ENCODE measurements at regions of chr13 and their contacts with region 1.

Region 1: GRCh38 chr13:45490068-45490467 is 25.3 kb downstream of the COG3 start:
- DNase-seq: no peak
- H3K4me3 ChIP-seq: no peak overlapping the region
- H3K27ac ChIP-seq: no peak overlapping the region
- H3K4me1 ChIP-seq: no peaks in the 10 kb centered on the region
- H3K27me3 ChIP-seq: no peaks in the 10 kb centered on the region
- CTCF ChIP-seq: peak in 2 of 3 experiments; percentile 34 to 42; a peak in 2 of 4 replicates
- EP300 ChIP-seq: no peak
- POLR2A ChIP-seq: no peak
- RAD21 ChIP-seq: peak; percentile 55 to 66

Region 2: DNA sequence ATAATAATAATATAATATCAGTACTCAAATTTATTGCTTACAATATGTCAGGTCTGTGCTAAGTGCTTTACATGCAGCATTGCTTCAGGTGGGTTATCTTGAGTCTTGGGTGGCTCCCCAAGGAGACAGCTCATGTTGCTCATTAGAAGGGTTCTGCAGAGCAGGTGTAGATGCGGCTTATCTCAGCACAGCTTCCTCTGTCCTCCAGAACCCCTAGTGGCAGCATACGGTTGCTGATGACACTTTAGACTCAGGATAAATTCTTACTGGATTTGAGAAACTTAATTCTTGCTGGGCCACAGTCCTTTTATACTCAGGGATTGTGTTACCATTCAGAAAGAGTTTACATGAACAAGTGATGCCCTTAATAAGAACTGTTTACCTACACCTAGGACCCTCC is 16.4 kb before region 1 on chr13:
- CTCF ChIA-PET with region 1: interaction called, 10 read pairs
- POLR2A ChIA-PET with region 1: no interaction called
- DNase-seq: no peak
- H3K4me3 ChIP-seq: no peak overlapping the region
- H3K27ac ChIP-seq: no peak overlapping the region
- H3K4me1 ChIP-seq: peaks cover 0 to 2% (median 0%) of the 10 kb centered on the region in 4 experiments; a peak in 2 of 7 replicates
- H3K27me3 ChIP-seq: no peaks in the 10 kb centered on the region
- CTCF ChIP-seq: peak; percentile 25 to 66 (median 53)
- EP300 ChIP-seq: no peak
- POLR2A ChIP-seq: no peak
- RAD21 ChIP-seq: peak; percentile 39 to 47

Region 3: DNA sequence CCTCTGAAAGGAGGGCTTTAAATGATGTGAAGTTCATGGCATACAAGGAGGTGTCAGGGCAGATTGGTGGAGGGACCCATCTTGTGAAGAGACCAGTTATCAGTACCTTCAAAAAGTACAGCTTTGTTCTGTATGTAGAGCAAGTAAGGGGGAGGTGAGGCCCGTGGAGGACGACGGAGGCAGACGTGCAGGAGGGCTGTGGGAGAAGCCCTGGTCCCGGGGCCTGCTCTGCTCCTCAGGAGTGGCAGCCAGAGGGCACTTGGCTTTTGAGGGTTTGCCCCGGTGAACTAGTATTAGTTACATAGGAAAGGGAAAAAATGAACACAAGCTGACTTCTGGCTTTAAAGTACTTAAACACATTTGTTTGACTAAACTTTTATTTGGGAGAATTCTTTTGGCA is 16.7 kb after region 1 on chr13:
- CTCF ChIA-PET with region 1: interaction called, 10 read pairs
- POLR2A ChIA-PET with region 1: no interaction called
- DNase-seq: no peak
- H3K4me3 ChIP-seq: no peak overlapping the region
- H3K27ac ChIP-seq: no peak overlapping the region
- H3K4me1 ChIP-seq: no peaks in the 10 kb centered on the region
- H3K27me3 ChIP-seq: no peaks in the 10 kb centered on the region
- CTCF ChIP-seq: no peak
- EP300 ChIP-seq: no peak
- POLR2A ChIP-seq: no peak
- RAD21 ChIP-seq: no peak